ENCODE measurements at regions of chr17 and their contacts with region 1.

Region 1: GRCh38 chr17:42609182-42609813 is at the starts of genes RETREG3 and TUBG1:
- DNase-seq: peak; percentile 99
- ATAC-seq: peak; percentile 93
- H3K4me3 ChIP-seq: peak within 1 kb of the TSS; percentile 75
- H3K27ac ChIP-seq: peak within 1 kb of the TSS; percentile 83
- H3K4me1 ChIP-seq: peaks cover 3% of the 10 kb centered on the region
- H3K27me3 ChIP-seq: no peaks in the 10 kb centered on the region
- CTCF ChIP-seq: peak; percentile 54
- POLR2A ChIP-seq: peak; percentile 78
- RAD21 ChIP-seq: peak; percentile 52
- total RNA-seq, gene RETREG3: 44.1 and 47.2 TPM in 2 replicates
- total RNA-seq, gene TUBG1: 38.9 and 42.5 TPM in 2 replicates

Region 2: GRCh38 chr17:42577532-42578281 is 31.6 kb before region 1 on chr17 and contains the start of gene PSMC3IP:
- CTCF ChIA-PET with region 1: interaction called, 3 read pairs
- POLR2A ChIA-PET with region 1: interaction called, 3 read pairs
- dilution Hi-C with region 1: no loop called
- in situ Hi-C with region 1: no loop called
- intact Hi-C with region 1: loop called (anchors 2 kb)
- DNase-seq: peak; percentile 92
- ATAC-seq: peak; percentile 94
- H3K4me3 ChIP-seq: peak within 1 kb of the TSS; percentile 81
- H3K27ac ChIP-seq: peak within 1 kb of the TSS; percentile 96
- H3K4me1 ChIP-seq: peaks cover 5% of the 10 kb centered on the region
- H3K27me3 ChIP-seq: no peaks in the 10 kb centered on the region
- CTCF ChIP-seq: peak; percentile 56
- POLR2A ChIP-seq: no peak; the same call in 1 of the 2 replicates
- RAD21 ChIP-seq: 0 out of 2 replicates have a peak, but pooled peaks have one; percentile 24
- total RNA-seq, gene PSMC3IP: 5.6 and 8.9 TPM in 2 replicates

Region 3: DNA sequence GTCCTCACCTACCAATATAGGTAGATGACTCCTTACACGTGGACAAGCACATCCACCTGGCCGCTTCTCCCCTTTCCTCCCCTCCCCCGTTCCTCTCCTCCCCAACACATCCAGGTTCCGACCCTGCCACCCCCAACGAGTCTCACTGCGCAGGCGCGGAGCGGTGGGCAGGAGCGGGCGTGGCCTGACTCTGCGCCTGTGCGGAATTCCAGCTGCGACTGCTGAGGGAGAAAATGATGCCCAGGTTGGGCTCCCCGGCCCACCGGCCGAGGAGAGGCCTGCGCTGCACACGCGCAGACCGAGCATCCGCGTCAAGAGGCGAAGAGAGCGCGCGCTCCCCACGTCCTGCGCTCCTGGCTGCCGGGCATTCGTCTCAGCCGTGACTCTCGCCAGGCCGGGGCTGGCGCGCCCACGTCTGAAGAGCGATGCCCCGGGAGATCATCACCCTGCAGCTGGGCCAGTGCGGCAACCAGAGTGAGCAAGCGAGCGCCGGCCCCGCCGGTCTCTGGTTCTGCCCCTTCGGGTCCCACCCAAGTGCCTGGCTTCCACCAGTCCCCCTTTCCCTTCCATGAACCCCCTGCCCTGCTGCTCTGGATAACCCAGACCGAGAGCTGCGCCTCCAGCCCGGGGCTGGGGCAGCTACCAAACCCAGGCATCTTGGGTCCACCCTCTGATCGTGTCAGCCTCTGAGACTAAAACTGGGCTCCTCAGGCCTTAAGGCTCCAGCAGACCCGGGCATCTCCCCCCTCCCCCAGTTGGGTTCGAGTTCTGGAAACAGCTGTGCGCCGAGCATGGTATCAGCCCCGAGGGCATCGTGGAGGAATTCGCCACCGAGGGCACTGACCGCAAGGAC is 50.0 kb after region 1 on chr17 and contains the start of gene TUBG2:
- CTCF ChIA-PET with region 1: no interaction called
- POLR2A ChIA-PET with region 1: no interaction called
- dilution Hi-C with region 1: no loop called
- in situ Hi-C with region 1: no loop called
- intact Hi-C with region 1: loop called (anchors 5 kb)
- DNase-seq: peak; percentile 87
- ATAC-seq: peak; percentile 95
- H3K4me3 ChIP-seq: peak within 1 kb of the TSS; percentile 66
- H3K27ac ChIP-seq: peak within 1 kb of the TSS; percentile 61
- H3K4me1 ChIP-seq: peaks cover 9% of the 10 kb centered on the region
- H3K27me3 ChIP-seq: peaks cover 2% of the 10 kb centered on the region
- CTCF ChIP-seq: no peak
- POLR2A ChIP-seq: no peak
- RAD21 ChIP-seq: no peak
- total RNA-seq, gene TUBG2: 3.3 and 3.6 TPM in 2 replicates

Measured in IMR-90 (cell line).